ENCODE measurements at regions of chr5 and their contacts with region 1.

Region 1: DNA sequence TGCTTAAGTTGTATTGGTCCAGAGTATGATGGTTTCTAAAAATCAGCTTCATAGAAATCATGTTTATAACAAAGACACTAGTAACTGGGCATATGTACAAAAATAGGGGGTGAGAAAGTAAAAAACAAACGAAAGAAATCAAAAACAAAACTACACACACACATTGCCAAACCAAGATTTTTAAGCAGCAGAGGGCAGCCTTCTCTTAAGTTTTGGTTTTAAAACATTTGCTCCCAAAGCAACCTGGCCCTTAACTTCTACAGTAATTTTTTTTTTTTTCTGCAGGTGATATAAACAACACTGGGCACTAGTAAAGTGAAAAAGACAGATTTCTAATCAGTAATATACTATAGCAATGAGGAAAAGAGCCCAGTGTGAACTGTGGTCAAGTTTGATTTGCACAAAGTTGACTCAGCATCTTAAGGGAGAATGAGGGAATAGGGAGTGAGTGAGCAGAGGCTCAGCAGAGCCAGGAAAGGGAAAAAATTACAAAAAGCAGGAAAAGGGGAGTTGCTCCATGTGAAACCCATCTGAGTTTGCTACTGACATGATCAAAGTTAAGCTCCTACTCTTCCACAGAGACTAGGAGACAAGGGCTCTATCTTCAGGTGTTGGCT is 13.4 kb upstream of the GAPT start:
- DNase-seq: peak; percentile 59
- ATAC-seq: no peak
- H3K4me3 ChIP-seq: peak overlapping the region in 1 of 5 experiments; percentile 18
- H3K4me3 Mint-ChIP-seq: peak overlapping the region; percentile 14
- H3K27ac ChIP-seq: no peak overlapping the region
- H3K27ac Mint-ChIP-seq: no peak overlapping the region
- H3K4me1 ChIP-seq: peaks cover 15 to 21% of the 10 kb centered on the region in 2 donors
- H3K4me1 Mint-ChIP-seq: peaks cover 20% of the 10 kb centered on the region
- H3K27me3 ChIP-seq: no peaks in the 10 kb centered on the region
- H3K27me3 Mint-ChIP-seq: no peaks in the 10 kb centered on the region
- CTCF ChIP-seq: peak; percentile 76

Region 2: GRCh38 chr5:57186194-57186593 is 1291.7 kb before region 1 on chr5:
- CTCF ChIA-PET with region 1: no interaction called
- POLR2A ChIA-PET with region 1: no interaction called
- intact Hi-C with region 1: no loop called
- DNase-seq: no peak
- ATAC-seq: no peak
- H3K4me3 ChIP-seq: no peak overlapping the region
- H3K4me3 Mint-ChIP-seq: peak overlapping the region; percentile 60
- H3K27ac ChIP-seq: peak overlapping the region in 1 of 2 donors; percentile 36
- H3K27ac Mint-ChIP-seq: peak overlapping the region; percentile 50
- H3K4me1 ChIP-seq: peaks cover 58% of the 10 kb centered on the region in 2 donors
- H3K4me1 Mint-ChIP-seq: peaks cover 71% of the 10 kb centered on the region
- H3K27me3 ChIP-seq: no peaks in the 10 kb centered on the region
- H3K27me3 Mint-ChIP-seq: no peaks in the 10 kb centered on the region
- CTCF ChIP-seq: no peak

Region 3: DNA sequence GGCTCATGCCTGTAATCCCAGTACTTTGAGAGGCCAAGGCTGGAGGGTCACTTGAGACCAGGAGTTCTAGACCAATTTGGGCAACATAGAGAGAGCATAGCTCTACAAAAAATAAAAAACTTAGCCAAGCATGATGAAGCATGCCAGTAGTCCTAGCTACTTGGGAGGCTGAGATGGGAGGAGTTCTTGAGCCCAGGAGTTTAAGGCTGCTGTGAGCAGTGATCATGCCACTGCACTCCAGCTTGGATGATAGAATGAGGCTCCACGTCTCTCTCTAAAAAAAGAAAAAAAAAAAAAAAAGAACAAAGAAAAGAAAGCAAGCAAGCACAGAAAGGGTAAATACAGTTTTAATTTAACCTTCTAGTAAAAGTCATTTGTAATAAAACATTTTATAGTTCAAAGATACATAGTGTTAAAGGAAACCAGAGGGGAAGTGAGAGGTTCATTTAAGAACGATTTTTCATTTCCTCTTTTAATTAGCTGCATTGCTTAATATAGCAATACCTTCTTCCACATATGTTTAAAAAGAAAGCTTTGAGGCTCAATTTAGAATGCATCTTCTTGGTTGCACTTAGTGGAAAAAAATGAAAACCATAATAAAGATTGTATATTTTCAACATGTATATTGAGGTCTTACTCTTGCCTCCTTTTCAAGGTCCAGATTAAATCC is 28.2 kb after region 1 on chr5:
- CTCF ChIA-PET with region 1: interaction called, 20 read pairs
- POLR2A ChIA-PET with region 1: no interaction called
- intact Hi-C with region 1: no loop called
- DNase-seq: peak; percentile 55
- ATAC-seq: peak; percentile 92
- H3K4me3 ChIP-seq: peak overlapping the region in 4 of 5 experiments; percentile 12 to 57 (median 18)
- H3K4me3 Mint-ChIP-seq: peak overlapping the region; percentile 64
- H3K27ac ChIP-seq: peak overlapping the region; percentile 47 to 61
- H3K27ac Mint-ChIP-seq: peak overlapping the region; percentile 81
- H3K4me1 ChIP-seq: peaks cover 62 to 63% of the 10 kb centered on the region in 2 donors
- H3K4me1 Mint-ChIP-seq: peaks cover 76% of the 10 kb centered on the region
- H3K27me3 ChIP-seq: no peaks in the 10 kb centered on the region
- H3K27me3 Mint-ChIP-seq: no peaks in the 10 kb centered on the region
- CTCF ChIP-seq: no peak

Region 4: GRCh38 chr5:58565033-58565432 is 87.2 kb after region 1 on chr5:
- CTCF ChIA-PET with region 1: interaction called, 26 read pairs
- POLR2A ChIA-PET with region 1: no interaction called
- intact Hi-C with region 1: no loop called
- DNase-seq: no peak
- ATAC-seq: no peak
- H3K4me3 ChIP-seq: no peak overlapping the region
- H3K4me3 Mint-ChIP-seq: no peak overlapping the region
- H3K27ac ChIP-seq: no peak overlapping the region
- H3K27ac Mint-ChIP-seq: no peak overlapping the region
- H3K4me1 ChIP-seq: no peaks in the 10 kb centered on the region
- H3K4me1 Mint-ChIP-seq: peaks cover 10% of the 10 kb centered on the region
- H3K27me3 ChIP-seq: no peaks in the 10 kb centered on the region
- H3K27me3 Mint-ChIP-seq: no peaks in the 10 kb centered on the region
- CTCF ChIP-seq: no peak

Region 5: DNA sequence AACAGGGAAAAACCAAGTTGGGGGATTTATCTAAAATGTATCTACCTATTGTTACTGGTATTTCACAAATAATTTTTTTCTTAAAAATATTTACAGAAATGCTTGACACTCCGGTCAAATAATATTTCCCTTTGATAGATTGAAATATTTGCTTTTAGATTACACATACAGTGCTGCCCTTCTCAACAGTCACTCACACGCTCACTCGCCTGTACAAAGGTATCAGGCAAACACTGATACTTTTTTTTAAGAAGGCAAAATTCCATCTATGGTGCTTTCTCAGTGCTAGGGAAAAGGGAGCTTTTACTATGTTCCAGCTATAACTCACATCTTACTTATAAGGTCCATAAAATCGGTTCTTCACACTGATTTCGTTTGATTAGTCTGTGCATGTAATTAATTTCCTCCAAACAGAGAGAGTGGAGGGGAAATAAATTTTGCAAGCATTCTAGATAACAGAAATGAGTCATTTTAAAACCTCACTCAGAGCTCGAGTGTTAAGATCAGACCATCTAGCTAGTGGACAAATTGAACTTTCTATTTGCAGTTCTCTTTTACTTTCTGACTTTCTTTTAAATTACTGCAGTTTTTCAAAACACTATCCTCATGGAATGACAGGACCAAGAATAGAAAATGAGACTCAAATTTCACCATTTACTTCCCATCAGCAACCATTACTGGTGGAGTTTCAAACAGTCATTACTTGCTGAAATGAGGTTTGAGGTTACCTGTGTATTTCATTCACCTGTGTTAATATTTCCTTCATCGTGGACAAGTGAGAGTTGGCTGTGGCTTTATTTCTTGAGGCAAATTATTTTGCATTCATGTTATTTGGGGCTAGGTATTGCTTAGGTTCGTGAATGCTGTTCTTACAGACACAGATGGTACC is 378.2 kb after region 1 on chr5:
- CTCF ChIA-PET with region 1: interaction called, 354 read pairs
- POLR2A ChIA-PET with region 1: no interaction called
- intact Hi-C with region 1: no loop called
- DNase-seq: no peak
- ATAC-seq: no peak
- H3K4me3 ChIP-seq: no peak overlapping the region
- H3K4me3 Mint-ChIP-seq: no peak overlapping the region
- H3K27ac ChIP-seq: no peak overlapping the region
- H3K27ac Mint-ChIP-seq: no peak overlapping the region
- H3K4me1 ChIP-seq: no peaks in the 10 kb centered on the region
- H3K4me1 Mint-ChIP-seq: no peaks in the 10 kb centered on the region
- H3K27me3 ChIP-seq: peaks cover 0 to 6% (median 4%) of the 10 kb centered on the region in 4 experiments
- H3K27me3 Mint-ChIP-seq: peaks cover 18% of the 10 kb centered on the region
- CTCF ChIP-seq: no peak